Gastrocnemius medialis (tissue), 4 donors: ENCODE measurements at regions of chr4 and their contacts with region 1.

Region 1: GRCh38 chr4:6716018-6716911 is at the start of gene BLOC1S4:
- DNase-seq: peak; percentile 81 to 86
- ATAC-seq: peak; percentile 87 to 88
- H3K4me3 ChIP-seq: peak within 1 kb of the TSS; percentile 75 to 89 (median 80)
- H3K27ac ChIP-seq: peak within 1 kb of the TSS; percentile 85 to 95 (median 92)
- H3K4me1 ChIP-seq: peaks cover 27 to 28% of the 10 kb centered on the region in 2 donors
- H3K27me3 ChIP-seq: no peaks in the 10 kb centered on the region
- CTCF ChIP-seq: peak in 3 of 5 experiments; percentile 30 to 36 (median 34)
- POLR2A ChIP-seq: peak; percentile 85 to 95
- total RNA-seq, gene BLOC1S4: 15.7 to 25.7 (median 22.3) TPM

Region 2: DNA sequence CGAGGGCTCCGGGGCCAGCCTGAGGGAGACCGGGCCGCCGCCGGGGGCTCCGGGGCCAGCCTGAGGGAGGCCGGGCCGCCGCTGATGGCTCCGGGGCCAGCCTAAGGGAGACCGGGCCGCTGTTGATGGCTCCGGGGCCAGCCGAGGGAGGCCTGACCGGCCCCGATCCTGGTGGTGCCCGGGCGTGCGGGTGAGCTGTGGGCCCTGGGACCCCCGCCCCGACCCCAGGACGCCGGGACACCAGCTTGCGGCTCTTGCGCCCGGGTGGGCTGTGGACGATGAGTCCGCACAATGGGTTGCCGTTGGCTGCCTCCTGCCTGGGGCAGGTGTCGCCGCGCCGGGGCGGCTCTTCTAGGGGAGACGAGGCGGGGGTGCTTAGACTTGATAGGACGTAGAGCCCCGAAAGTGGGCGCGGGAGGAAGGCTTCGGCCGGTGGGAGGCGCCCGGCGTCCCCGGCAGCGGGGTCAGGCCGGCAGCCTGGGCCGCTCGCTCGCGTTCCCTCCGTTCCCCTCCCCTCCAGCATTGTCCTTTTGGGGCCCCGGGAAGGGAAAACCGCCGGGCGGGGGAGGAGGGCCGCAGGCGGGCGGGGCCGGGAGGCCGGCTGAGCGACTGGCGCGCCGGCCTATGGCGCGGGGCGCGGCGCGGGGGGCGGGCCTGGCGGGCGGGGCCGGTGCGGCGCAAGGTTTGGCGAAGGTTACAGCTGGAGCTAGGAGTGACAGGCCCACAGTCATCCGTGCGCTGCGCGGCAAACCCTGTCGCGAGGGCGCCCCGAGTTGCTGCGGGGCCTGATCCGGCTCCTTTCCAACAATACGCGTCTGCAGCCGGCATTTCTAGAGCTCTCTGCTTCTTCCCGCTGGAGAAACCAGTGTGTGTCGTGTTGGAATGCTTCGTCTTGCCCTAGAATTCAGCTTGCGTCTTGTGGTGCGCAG is 67.1 kb after region 1 on chr4:
- in situ Hi-C with region 1: no loop called
- intact Hi-C with region 1: loop called (anchors 1 kb)
- DNase-seq: peak; percentile 88 to 93
- ATAC-seq: peak; percentile 67 to 72
- H3K4me3 ChIP-seq: peak overlapping the region; percentile 74 to 98 (median 82)
- H3K27ac ChIP-seq: peak overlapping the region; percentile 95 to 100 (median 98)
- H3K4me1 ChIP-seq: peaks cover 58 to 59% of the 10 kb centered on the region in 2 donors
- H3K27me3 ChIP-seq: no peaks in the 10 kb centered on the region
- CTCF ChIP-seq: peak in 4 of 5 experiments; percentile 4 to 42 (median 19)
- POLR2A ChIP-seq: peak; percentile 94 to 95

Region 3: GRCh38 chr4:6885951-6886557 is 169.8 kb after region 1 on chr4:
- in situ Hi-C with region 1: loop called in 1 of 4 experiments (anchors 10 kb)
- intact Hi-C with region 1: loop called (anchors 1 kb)
- DNase-seq: peak; percentile 73 to 81
- ATAC-seq: peak; percentile 86 to 87
- H3K4me3 ChIP-seq: peak overlapping the region; percentile 8 to 40 (median 20)
- H3K27ac ChIP-seq: peak overlapping the region; percentile 84 to 94 (median 90)
- H3K4me1 ChIP-seq: peaks cover 18 to 19% of the 10 kb centered on the region in 2 donors
- H3K27me3 ChIP-seq: no peaks in the 10 kb centered on the region
- CTCF ChIP-seq: peak; percentile 9 to 56 (median 44)
- POLR2A ChIP-seq: peak in 1 of 2 donors; percentile 31

Region 4: DNA sequence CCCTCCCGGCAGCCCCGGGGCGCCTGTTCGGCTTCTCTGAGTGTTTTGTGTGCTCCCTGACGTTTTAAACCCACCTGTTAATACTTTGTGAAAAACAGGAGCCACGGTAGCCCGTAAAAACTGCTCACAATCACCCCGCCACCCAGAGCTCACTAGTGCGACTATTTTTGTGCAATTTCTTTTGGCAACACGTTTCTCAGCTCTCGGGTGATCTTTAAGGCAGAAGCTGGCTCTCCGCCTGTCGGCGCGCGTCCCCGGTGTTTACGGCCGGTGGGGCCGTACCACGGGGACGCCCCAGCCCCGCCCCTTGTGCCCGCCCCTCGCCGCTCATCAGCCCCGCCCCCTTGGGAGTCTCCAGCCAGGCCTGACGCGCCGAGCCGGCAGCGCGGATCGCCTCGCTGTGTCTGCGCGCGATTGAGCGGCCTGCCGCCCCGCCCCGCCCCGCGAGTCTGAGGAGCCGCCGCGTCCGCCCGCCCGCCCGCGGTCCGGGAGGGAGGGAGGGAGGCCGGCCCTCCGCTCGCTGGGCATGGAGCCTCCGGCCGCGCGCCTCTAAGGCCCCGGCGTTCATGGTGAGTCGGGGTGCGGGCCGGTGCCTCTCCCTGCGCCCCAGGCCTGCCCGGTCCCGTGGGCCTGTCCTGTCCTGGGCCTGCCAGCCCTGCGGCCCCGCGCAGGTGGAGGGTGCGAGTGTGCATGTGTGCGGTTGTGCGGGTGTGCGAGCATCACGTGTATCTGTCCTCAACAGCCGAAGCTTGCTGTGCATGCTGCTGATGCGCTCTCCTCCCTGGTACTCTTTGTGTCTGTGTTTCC is 270.7 kb after region 1 on chr4:
- in situ Hi-C with region 1: no loop called
- intact Hi-C with region 1: loop called (anchors 5 kb)
- DNase-seq: peak; percentile 94 to 95
- ATAC-seq: peak; percentile 81 to 86
- H3K4me3 ChIP-seq: peak overlapping the region; percentile 84 to 97 (median 88)
- H3K27ac ChIP-seq: peak overlapping the region; percentile 93 to 99 (median 98)
- H3K4me1 ChIP-seq: peaks cover 80% of the 10 kb centered on the region in 2 donors
- H3K27me3 ChIP-seq: no peaks in the 10 kb centered on the region
- CTCF ChIP-seq: peak in 1 of 5 experiments; percentile 5
- POLR2A ChIP-seq: peak; percentile 89 to 92